Right ventricle myocardium superior (tissue), 1 donor: ENCODE measurements at regions of chrX and their contacts with region 1.

Region 1: DNA sequence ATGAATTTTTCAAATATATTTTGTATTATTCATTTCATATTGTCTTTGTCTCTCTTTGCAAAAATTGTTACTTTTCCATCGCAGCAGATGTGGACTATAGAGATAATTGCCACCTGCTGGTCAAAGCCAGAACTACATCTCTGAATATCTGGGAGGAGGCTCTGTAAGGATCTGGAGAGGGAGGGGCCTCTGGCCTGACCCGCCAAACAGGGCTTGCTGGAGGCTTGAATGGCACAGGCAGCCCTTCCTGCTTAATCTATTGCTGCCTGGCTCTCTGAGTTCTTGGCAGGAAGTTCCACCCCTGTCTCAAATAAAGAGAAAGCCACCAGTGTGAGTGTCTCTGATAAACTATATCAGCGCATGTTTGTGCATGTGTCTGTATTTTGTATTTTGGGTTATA is 132.4 kb downstream of the ZMAT1 start:
- DNase-seq: peak; percentile 84
- ATAC-seq: peak; percentile 100

Region 2: DNA sequence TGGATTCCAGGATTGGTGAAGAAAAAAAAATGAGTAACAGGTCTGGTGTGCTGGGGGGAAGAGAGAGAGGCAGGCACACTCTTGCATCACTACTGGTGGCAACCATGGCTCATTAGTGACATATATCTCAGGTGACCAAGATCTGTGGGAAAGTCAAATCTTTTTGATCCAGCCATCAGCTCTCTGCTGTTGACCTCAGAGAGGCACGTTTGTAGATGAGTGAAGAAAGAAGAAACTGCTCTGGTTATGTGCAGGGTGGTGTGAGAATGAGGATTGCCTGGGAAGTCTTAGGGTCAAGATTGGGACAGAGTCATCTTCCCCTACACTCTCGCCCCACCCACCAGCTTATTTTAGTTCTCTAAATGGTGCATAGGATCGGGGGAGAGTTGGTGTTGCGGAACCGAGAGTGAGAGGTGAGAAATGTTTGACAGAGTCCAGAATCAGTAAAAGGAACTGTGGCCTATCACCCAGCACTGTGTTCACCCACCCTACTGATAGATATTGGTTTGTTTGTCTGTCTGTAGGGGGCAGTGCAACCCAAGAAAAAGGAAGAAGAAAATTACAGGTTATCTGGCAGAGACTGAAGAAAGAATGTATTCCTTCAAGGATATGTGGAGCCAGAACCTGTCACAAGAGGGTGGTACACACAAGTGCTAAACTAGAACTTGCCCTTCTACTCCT is 203.5 kb before region 1 on chrX:
- intact Hi-C with region 1: loop called (anchors 5 kb)
- DNase-seq: no peak
- ATAC-seq: peak; percentile 63

Region 3: GRCh38 chrX:101658661-101659491 is 140.5 kb before region 1 on chrX:
- intact Hi-C with region 1: no loop called
- DNase-seq: peak; percentile 83
- ATAC-seq: peak; percentile 95

Region 4: DNA sequence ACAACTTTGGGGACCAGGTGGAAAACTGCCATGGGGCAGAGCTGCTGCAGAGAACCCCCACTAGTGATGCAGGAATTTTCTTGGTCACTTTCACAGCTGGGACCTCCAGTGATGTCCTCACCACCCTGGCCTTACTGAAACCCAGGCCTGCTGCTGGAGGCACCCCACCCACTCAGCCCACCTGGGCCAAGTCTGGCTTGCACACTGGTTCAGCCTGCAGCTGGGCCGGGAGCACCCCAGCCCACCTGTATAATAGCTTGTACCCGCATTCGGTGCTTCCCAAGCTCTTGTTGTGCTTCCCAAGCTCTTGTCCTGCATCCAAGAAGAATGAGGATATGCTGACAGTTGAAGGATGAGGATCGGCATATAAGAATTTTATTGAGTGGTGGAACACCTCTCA is 218.8 kb after region 1 on chrX:
- intact Hi-C with region 1: no loop called
- DNase-seq: no peak
- ATAC-seq: no peak